A549 (cell line): ENCODE measurements at regions of chr17 and their contacts with region 1.

Region 1: DNA sequence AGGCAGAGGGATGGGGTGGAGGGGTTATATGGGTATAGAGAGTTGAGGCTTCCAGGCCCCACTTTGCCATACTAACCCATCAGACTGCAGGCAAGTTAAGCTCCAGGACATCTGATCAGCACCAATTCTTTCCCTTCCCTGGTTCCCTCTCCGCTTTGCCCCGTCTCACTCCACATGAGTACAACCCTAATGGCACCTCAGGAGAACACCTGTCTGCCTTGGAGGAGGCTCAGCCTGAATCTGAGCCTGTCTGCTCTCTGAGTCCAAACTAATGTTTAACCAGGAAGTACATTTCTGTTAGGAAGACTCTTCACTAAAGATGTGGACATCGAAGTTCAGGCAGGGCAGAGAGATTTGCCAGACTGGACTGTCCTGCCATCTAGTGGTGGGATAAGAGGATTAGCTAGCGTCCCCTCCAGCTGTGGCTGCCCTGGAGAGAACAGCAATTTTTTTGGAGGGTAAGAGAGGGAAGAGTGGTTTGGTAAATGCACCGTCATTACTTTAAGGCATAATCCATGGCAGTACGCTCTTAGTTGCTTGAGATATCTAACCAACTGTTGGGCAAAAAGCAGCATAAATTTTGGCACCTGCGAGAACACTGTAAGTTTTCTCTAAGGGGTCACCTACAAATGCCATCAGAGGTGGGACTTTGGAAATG is 29.2 kb upstream of the LRRC75A start:
- DNase-seq: peak; percentile 95 to 98
- ATAC-seq: peak; percentile 95 to 97
- H3K4me3 ChIP-seq: no peak overlapping the region
- H3K27ac ChIP-seq: peak overlapping the region; percentile 58 to 80
- H3K4me1 ChIP-seq: peaks cover 17% of the 10 kb centered on the region
- CTCF ChIP-seq: peak; percentile 99
- EP300 ChIP-seq: no peak
- POLR2A ChIP-seq: no peak
- RAD21 ChIP-seq: peak; percentile 98 to 100

Region 2: DNA sequence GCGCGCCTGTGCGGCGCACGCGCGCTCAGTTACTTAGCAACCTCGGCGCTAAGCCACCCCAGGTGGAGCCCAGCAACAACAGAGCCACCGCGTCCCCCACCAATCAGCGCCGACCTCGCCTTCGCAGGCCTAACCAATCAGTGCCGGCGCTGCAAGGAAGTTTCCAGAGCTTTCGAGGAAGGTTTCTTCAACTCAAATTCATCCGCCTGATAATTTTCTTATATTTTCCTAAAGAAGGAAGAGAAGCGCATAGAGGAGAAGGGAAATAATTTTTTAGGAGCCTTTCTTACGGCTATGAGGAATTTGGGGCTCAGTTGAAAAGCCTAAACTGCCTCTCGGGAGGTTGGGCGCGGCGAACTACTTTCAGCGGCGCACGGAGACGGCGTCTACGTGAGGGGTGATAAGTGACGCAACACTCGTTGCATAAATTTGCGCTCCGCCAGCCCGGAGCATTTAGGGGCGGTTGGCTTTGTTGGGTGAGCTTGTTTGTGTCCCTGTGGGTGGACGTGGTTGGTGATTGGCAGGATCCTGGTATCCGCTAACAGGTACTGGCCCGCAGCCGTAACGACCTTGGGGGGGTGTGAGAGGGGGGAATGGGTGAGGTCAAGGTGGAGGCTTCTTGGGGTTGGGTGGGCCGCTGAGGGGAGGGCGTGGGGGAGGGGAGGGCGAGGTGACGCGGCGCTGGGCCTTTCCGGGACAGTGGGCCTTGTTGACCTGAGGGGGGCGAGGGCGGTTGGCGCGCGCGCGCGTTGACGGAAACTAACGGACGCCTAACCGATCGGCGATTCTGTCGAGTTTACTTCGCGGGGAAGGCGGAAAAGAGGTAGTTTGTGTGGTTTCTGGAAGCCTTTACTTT is 140.3 kb before region 1 on chr17 and contains the start of gene UBB:
- CTCF ChIA-PET with region 1: interaction called, 19 read pairs
- POLR2A ChIA-PET with region 1: interaction called, 10 read pairs
- DNase-seq: peak; percentile 92 to 100
- ATAC-seq: peak; percentile 93
- H3K4me3 ChIP-seq: peak within 1 kb of the TSS; percentile 88
- H3K27ac ChIP-seq: peak within 1 kb of the TSS; percentile 91 to 95
- H3K4me1 ChIP-seq: peaks cover 43% of the 10 kb centered on the region
- CTCF ChIP-seq: no peak
- EP300 ChIP-seq: peak; percentile 12 to 56; a peak in 2 of 5 replicates
- POLR2A ChIP-seq: peak; percentile 100
- RAD21 ChIP-seq: no peak
- polyA plus RNA-seq, gene UBB: 2,851 and 4,311 TPM in 2 replicates

Region 3: GRCh38 chr17:16428098-16428882 is 92.9 kb before region 1 on chr17:
- CTCF ChIA-PET with region 1: interaction called, 31 read pairs
- POLR2A ChIA-PET with region 1: no interaction called
- DNase-seq: peak; percentile 83 to 93
- ATAC-seq: peak; percentile 83 to 96
- H3K4me3 ChIP-seq: no peak overlapping the region
- H3K27ac ChIP-seq: peak overlapping the region; percentile 50 to 70; a peak in 5 of 6 replicates
- H3K4me1 ChIP-seq: 0 out of 3 replicates have a peak, but pooled peaks cover 3% of the 10 kb centered on the region
- CTCF ChIP-seq: peak; percentile 71
- EP300 ChIP-seq: no peak
- POLR2A ChIP-seq: no peak
- RAD21 ChIP-seq: peak; percentile 48 to 61; a peak in 4 of 5 replicates

Region 4: GRCh38 chr17:16463358-16464302 is 57.6 kb before region 1 on chr17:
- CTCF ChIA-PET with region 1: interaction called, 589 read pairs
- POLR2A ChIA-PET with region 1: no interaction called
- DNase-seq: peak in 1 of 2 experiments; percentile 62
- ATAC-seq: peak; percentile 57 to 81; a peak in 5 of 6 replicates
- H3K4me3 ChIP-seq: no peak overlapping the region
- H3K27ac ChIP-seq: peak overlapping the region in 1 of 2 experiments; percentile 12; a peak in 1 of 6 replicates
- H3K4me1 ChIP-seq: peaks cover 10% of the 10 kb centered on the region; the same call in 2 of the 3 replicates
- CTCF ChIP-seq: no peak
- EP300 ChIP-seq: no peak
- POLR2A ChIP-seq: no peak
- RAD21 ChIP-seq: no peak

Region 5: DNA sequence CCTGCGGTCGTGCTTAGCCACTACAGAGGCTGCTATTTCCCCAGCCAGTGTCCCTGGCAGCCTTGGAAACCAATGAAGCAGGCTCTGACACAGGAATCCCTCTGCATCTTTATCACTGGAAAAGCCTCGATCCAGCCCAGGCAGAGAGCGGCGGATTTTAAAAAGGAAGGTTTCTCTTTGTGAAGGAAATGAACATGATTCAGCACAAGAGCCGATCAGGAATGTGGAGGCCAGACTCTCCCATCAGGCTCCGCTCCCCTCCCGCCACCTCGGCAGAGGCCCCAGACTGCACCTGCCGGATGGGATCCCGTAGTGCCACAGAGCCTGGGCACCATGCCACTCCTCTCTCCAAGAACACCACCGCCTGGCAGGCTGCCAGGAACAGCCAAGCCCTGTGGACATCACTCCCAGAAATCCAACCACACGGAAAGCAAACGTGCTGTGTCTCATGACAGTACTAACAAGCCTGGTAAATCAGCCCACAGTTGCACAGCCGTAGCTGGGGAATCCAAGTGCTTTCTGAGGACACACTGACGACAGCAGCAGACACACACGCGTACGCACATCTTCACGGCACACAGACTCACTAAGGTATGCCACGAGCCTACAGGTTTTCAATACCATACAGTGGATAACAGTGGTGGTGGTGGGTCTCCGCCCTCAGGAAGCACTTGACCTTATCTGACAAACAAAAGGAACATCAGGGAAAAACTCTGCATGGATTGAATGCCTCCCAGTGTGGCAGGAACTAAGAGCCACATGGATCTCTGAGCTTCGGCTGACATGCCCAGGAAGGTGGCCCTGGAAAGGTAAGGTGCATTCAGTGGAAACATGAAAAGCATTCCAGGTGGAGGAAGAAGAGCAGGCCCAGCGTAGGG is 34.6 kb before region 1 on chr17:
- CTCF ChIA-PET with region 1: interaction called, 61 read pairs
- POLR2A ChIA-PET with region 1: interaction called, 3 read pairs
- DNase-seq: peak in 1 of 2 experiments; percentile 38
- ATAC-seq: no peak
- H3K4me3 ChIP-seq: no peak overlapping the region
- H3K27ac ChIP-seq: peak overlapping the region in 1 of 2 experiments; percentile 9; a peak in 1 of 6 replicates
- H3K4me1 ChIP-seq: peaks cover 14% of the 10 kb centered on the region; the same call in 2 of the 3 replicates
- CTCF ChIP-seq: no peak
- EP300 ChIP-seq: no peak
- POLR2A ChIP-seq: no peak
- RAD21 ChIP-seq: no peak

Region 6: GRCh38 chr17:16506188-16506587 is 15.0 kb before region 1 on chr17:
- CTCF ChIA-PET with region 1: interaction called, 160 read pairs
- POLR2A ChIA-PET with region 1: no interaction called
- DNase-seq: no peak
- ATAC-seq: no peak
- H3K4me3 ChIP-seq: no peak overlapping the region
- H3K27ac ChIP-seq: no peak overlapping the region
- H3K4me1 ChIP-seq: no peaks in the 10 kb centered on the region
- CTCF ChIP-seq: no peak
- EP300 ChIP-seq: no peak
- POLR2A ChIP-seq: no peak
- RAD21 ChIP-seq: no peak